ENCODE measurements at regions of chr9 and their contacts with region 1.

Region 1: DNA sequence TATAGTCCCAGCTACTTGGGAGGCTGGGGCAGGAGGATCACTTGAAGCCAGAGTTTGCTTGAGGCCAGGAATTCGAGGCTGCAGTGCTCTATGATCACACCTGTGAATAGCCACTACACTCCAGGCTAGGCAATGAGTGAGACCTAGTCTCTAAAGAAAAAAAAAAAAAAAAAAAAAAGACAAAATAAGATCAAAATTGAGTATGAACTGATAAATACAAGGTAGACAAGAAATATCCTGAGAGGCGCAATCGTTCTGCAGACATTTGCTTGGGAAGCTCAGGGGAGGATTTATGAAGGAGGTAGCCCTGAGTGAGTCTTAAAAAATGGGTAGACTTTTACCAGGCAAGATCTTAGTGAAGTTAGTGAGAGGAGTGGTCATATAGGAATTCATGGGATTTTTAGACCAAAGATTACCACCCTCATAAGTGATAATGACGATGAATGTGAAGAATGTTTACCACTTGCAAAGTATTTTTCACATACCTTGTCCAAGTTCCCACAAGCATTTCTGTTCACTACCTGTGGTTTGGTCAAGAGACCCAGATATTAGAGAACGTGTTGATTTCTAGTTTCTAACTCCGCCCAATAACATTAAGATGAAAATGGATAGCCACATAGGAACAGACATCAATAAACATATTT is 4.4 kb downstream of the PDCD1LG2 start:
- DNase-seq: no peak
- H3K4me3 ChIP-seq: no peak overlapping the region
- H3K4me3 Mint-ChIP-seq: no peak overlapping the region
- H3K27ac ChIP-seq: no peak overlapping the region
- H3K27ac Mint-ChIP-seq: no peak overlapping the region
- H3K4me1 ChIP-seq: peaks cover 3% of the 10 kb centered on the region
- H3K4me1 Mint-ChIP-seq: peaks cover 28 to 48% (median 48%) of the 10 kb centered on the region in 3 donors
- H3K27me3 ChIP-seq: no peaks in the 10 kb centered on the region
- H3K27me3 Mint-ChIP-seq: no peaks in the 10 kb centered on the region

Region 2: DNA sequence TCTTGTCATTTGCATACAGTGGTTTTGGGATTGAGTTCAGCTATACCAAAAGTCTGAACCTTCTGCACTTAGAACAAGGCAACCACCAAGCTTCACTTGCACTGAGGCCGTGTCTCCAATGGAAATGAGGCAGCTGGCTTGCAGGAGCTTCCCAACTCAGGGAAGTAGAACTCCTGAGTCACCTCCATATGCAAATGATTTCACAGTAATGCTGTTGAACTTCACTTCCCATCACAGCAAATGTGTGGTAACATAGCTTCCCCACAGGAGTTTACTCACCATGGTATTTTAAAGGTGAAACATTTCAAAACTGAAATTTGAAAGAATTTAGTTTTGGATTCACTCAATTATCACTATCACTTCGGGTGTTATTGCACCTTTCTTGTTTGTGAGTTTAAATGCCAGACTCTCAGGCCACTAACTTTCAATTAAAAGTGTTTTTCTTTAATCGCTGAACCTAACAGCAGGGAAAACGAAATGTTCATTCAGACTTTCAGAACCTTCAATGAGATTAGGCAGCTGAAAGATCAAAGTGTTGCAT is 55.4 kb before region 1 on chr9:
- CTCF ChIA-PET with region 1: no interaction called
- POLR2A ChIA-PET with region 1: no interaction called
- DNase-seq: no peak
- H3K4me3 ChIP-seq: no peak overlapping the region
- H3K4me3 Mint-ChIP-seq: no peak overlapping the region
- H3K27ac ChIP-seq: no peak overlapping the region
- H3K27ac Mint-ChIP-seq: peak overlapping the region in 3 of 8 donors; percentile 1 to 72 (median 2)
- H3K4me1 ChIP-seq: no peaks in the 10 kb centered on the region
- H3K4me1 Mint-ChIP-seq: peaks cover 24 to 37% (median 36%) of the 10 kb centered on the region in 3 donors
- H3K27me3 ChIP-seq: no peaks in the 10 kb centered on the region
- H3K27me3 Mint-ChIP-seq: no peaks in the 10 kb centered on the region

Region 3: GRCh38 chr9:5499889-5500398 is 14.8 kb before region 1 on chr9:
- CTCF ChIA-PET with region 1: no interaction called
- POLR2A ChIA-PET with region 1: no interaction called
- DNase-seq: no peak
- H3K4me3 ChIP-seq: no peak overlapping the region
- H3K4me3 Mint-ChIP-seq: no peak overlapping the region
- H3K27ac ChIP-seq: no peak overlapping the region
- H3K27ac Mint-ChIP-seq: no peak overlapping the region
- H3K4me1 ChIP-seq: no peaks in the 10 kb centered on the region
- H3K4me1 Mint-ChIP-seq: peaks cover 5 to 18% (median 6%) of the 10 kb centered on the region in 3 donors
- H3K27me3 ChIP-seq: no peaks in the 10 kb centered on the region
- H3K27me3 Mint-ChIP-seq: peaks cover 0 to 10% of the 10 kb centered on the region in 2 donors

Region 4: DNA sequence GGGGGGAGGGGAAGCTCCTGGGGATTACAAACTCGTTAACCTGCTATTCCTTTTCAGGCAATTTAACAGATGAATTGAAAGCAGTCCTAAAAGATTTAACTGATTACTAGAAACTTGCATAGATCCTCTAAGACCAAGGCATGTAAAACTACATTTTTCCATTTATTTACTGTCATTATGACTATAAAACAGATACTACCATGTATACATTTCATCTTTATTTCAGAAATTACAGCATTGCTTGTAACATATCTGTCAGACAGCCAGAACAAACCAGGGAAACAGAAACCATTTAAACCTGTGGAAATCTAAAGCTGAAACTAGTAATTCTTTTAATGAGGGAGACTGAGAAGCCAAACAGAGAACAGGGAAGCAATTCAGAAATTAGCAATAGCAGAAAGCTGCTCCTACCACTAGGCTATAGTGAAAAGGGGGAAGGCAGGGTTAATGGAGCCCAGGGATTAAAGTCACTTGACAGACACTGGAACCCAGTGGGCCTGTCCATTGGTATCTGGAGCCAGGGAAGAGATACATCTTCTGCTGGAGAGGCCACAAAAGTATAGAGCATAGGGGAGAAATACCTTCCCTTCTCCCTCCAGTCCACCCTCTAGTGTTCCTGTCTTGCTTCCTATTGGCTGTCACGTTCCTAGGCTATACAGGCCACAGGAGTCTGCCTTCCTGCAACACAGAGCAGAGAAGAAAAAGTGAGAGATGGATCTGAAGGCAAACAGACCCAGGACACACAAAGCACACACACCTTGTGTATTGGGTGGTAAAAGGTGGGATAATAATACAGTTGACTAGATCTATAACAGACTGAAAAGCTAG is 29.4 kb after region 1 on chr9:
- CTCF ChIA-PET with region 1: no interaction called
- POLR2A ChIA-PET with region 1: interaction called, 11 read pairs
- DNase-seq: no peak
- H3K4me3 ChIP-seq: no peak overlapping the region
- H3K4me3 Mint-ChIP-seq: no peak overlapping the region
- H3K27ac ChIP-seq: no peak overlapping the region
- H3K27ac Mint-ChIP-seq: no peak overlapping the region
- H3K4me1 ChIP-seq: no peaks in the 10 kb centered on the region
- H3K4me1 Mint-ChIP-seq: no peaks in the 10 kb centered on the region
- H3K27me3 ChIP-seq: no peaks in the 10 kb centered on the region
- H3K27me3 Mint-ChIP-seq: no peaks in the 10 kb centered on the region